CD4-positive, alpha-beta memory T cell (primary cell): ENCODE measurements at regions of chr2 and their contacts with region 1.

Region 1: DNA sequence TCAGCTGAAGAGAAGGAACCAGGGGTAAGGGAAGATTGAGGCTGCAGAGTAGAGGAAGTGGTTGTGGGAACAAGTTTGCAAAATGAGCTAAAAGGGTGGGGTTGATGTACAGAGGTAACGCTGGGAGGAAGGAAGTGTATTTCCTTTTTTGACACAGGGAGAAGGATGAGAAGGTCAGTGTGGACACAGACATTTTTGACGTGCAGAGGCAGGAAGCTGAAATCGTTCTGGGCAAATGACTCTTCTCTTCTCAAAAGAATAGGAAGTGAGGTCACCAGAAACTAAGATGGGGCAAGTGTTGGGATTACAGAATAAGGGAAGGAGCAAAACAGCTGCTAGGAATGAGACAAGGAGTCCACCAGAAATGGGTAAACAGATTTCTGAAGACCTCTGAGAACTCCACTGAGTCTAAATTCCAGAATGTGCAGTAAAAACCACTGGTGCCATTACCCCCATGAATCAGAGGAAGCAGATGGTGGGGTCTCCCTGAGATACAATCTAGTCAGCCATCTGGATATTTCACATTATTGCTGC is 20.0 kb upstream of the RNF149 start:
- DNase-seq: peak; percentile 65 to 81 (median 80)
- H3K4me3 ChIP-seq: peak overlapping the region; percentile 2 to 39
- H3K4me3 Mint-ChIP-seq: no peak overlapping the region
- H3K27ac ChIP-seq: peak overlapping the region; percentile 52
- H3K27ac Mint-ChIP-seq: no peak overlapping the region
- H3K4me1 ChIP-seq: peaks cover 70% of the 10 kb centered on the region
- H3K4me1 Mint-ChIP-seq: peaks cover 5 to 33% (median 6%) of the 10 kb centered on the region in 4 donors
- H3K27me3 ChIP-seq: no peaks in the 10 kb centered on the region
- H3K27me3 Mint-ChIP-seq: no peaks in the 10 kb centered on the region

Region 2: GRCh38 chr2:100013892-100014677 is 1314.5 kb before region 1 on chr2:
- CTCF ChIA-PET with region 1: no interaction called
- POLR2A ChIA-PET with region 1: no interaction called
- intact Hi-C with region 1: no loop called
- DNase-seq: no peak
- H3K4me3 ChIP-seq: no peak overlapping the region
- H3K4me3 Mint-ChIP-seq: no peak overlapping the region
- H3K27ac ChIP-seq: no peak overlapping the region
- H3K27ac Mint-ChIP-seq: no peak overlapping the region
- H3K4me1 ChIP-seq: no peaks in the 10 kb centered on the region
- H3K4me1 Mint-ChIP-seq: no peaks in the 10 kb centered on the region
- H3K27me3 ChIP-seq: no peaks in the 10 kb centered on the region
- H3K27me3 Mint-ChIP-seq: no peaks in the 10 kb centered on the region

Region 3: DNA sequence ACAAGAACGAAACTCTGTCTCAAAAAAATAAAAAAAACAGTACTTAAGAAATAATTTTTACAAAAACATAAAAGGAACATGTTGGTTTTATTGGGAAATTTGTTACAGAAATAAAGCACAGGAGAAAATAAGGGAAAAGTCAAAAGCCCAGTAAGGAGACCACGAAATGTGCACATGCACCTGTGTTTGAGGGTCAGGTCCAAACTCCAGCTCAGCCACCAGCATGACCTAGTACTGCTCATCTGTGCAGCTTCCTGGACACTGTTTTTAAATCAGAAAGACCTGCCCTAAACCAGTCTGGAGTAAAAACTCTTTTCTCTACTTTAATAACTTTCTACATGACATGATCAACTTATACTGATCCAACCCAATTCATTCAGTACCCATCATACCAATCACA is 41.2 kb before region 1 on chr2:
- CTCF ChIA-PET with region 1: no interaction called
- POLR2A ChIA-PET with region 1: interaction called, 12 read pairs
- intact Hi-C with region 1: no loop called
- DNase-seq: no peak
- H3K4me3 ChIP-seq: no peak overlapping the region
- H3K4me3 Mint-ChIP-seq: no peak overlapping the region
- H3K27ac ChIP-seq: no peak overlapping the region
- H3K27ac Mint-ChIP-seq: peak overlapping the region in 3 of 7 donors; percentile 42 to 65 (median 54)
- H3K4me1 ChIP-seq: no peaks in the 10 kb centered on the region
- H3K4me1 Mint-ChIP-seq: peaks cover 19 to 40% (median 34%) of the 10 kb centered on the region in 4 donors
- H3K27me3 ChIP-seq: no peaks in the 10 kb centered on the region
- H3K27me3 Mint-ChIP-seq: no peaks in the 10 kb centered on the region

Region 4: DNA sequence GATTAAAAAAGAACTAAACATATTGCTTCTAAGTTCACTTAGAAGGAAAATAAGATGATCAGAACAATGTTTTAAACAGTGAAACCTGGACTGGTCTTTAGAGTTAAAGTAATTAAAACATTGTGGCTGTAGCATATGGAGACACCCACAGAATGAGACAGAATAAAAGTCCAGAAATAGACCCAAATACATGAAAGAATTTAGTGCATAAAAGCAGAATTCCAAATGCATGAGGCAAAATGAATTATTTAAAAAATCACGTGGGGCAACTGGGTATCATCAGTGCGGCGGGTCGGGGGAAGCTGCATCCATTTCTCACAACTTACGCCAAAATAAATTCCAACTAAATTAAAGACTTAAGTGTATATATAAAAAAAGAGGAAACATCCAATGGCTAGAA is 32.2 kb before region 1 on chr2:
- CTCF ChIA-PET with region 1: interaction called, 3 read pairs
- POLR2A ChIA-PET with region 1: interaction called, 15 read pairs
- intact Hi-C with region 1: no loop called
- DNase-seq: no peak
- H3K4me3 ChIP-seq: no peak overlapping the region
- H3K4me3 Mint-ChIP-seq: peak overlapping the region in 7 of 8 donors; percentile 26 to 81 (median 37)
- H3K27ac ChIP-seq: no peak overlapping the region
- H3K27ac Mint-ChIP-seq: peak overlapping the region in 5 of 7 donors; percentile 29 to 96 (median 77)
- H3K4me1 ChIP-seq: peaks cover 73% of the 10 kb centered on the region
- H3K4me1 Mint-ChIP-seq: peaks cover 50 to 92% (median 60%) of the 10 kb centered on the region in 4 donors
- H3K27me3 ChIP-seq: no peaks in the 10 kb centered on the region
- H3K27me3 Mint-ChIP-seq: no peaks in the 10 kb centered on the region

Region 5: GRCh38 chr2:101302013-101302412 is 26.5 kb before region 1 on chr2:
- CTCF ChIA-PET with region 1: interaction called, 4 read pairs
- POLR2A ChIA-PET with region 1: interaction called, 247 read pairs
- intact Hi-C with region 1: loop called (anchors 1 kb)
- DNase-seq: no peak
- H3K4me3 ChIP-seq: no peak overlapping the region
- H3K4me3 Mint-ChIP-seq: peak overlapping the region in 7 of 8 donors; percentile 9 to 67 (median 46)
- H3K27ac ChIP-seq: peak overlapping the region; percentile 6
- H3K27ac Mint-ChIP-seq: peak overlapping the region in 5 of 7 donors; percentile 37 to 96 (median 47)
- H3K4me1 ChIP-seq: peaks cover 92% of the 10 kb centered on the region
- H3K4me1 Mint-ChIP-seq: peaks cover 66 to 98% (median 80%) of the 10 kb centered on the region in 4 donors
- H3K27me3 ChIP-seq: no peaks in the 10 kb centered on the region
- H3K27me3 Mint-ChIP-seq: no peaks in the 10 kb centered on the region

Region 6: DNA sequence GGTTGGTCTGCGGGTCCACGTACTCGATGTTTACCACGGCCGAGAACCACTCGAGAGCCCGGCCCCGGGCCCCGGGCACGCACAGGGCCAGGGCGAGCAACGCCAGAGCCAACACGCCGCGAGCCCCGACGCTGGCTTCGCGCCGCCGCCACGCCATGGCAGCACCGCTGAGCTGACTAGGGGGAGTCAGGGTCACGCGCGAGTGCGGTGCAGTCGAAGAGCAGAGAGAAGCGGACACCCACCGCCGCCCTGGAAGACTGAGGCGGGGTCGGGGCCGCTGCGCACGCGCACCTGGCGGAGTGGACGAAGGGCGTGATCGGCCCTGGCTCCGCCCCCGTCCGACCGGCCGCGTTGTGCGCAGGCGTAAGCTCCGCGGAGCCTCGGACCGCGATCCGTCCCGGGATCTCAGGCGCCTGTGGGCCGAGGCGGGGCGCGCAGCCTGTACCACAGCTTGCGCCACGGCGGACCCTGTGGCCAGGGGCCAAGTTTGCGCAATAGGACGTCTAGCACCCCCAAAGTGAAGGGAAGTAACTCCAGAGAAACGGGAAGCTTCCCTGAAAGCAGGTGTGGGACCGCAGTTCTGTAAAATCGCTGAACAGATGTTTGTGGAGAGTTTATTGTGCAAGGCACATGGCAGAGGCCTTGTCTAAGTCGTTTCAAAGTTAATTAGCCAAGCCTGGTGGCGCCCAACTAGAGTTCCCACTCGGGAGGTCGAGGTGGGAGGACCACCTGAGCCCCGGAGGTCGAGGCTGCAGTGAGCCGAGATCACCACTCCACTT is 19.9 kb before region 1 on chr2 and contains the start of gene RNF149:
- CTCF ChIA-PET with region 1: interaction called, 17 read pairs
- POLR2A ChIA-PET with region 1: interaction called, 247 read pairs
- intact Hi-C with region 1: loop called (anchors 1 kb)
- DNase-seq: peak; percentile 89 to 92 (median 90)
- H3K4me3 ChIP-seq: peak within 1 kb of the TSS; percentile 68 to 92
- H3K4me3 Mint-ChIP-seq: peak within 1 kb of the TSS; percentile 93 to 100 (median 100)
- H3K27ac ChIP-seq: peak within 1 kb of the TSS; percentile 86
- H3K27ac Mint-ChIP-seq: peak within 1 kb of the TSS; percentile 96 to 100 (median 99)
- H3K4me1 ChIP-seq: peaks cover 72% of the 10 kb centered on the region
- H3K4me1 Mint-ChIP-seq: peaks cover 53 to 95% (median 67%) of the 10 kb centered on the region in 4 donors
- H3K27me3 ChIP-seq: no peaks in the 10 kb centered on the region
- H3K27me3 Mint-ChIP-seq: no peaks in the 10 kb centered on the region
- total RNA-seq, gene RNF149: 138 to 154 TPM

Region 7: GRCh38 chr2:101341901-101342624 is 13.5 kb after region 1 on chr2:
- CTCF ChIA-PET with region 1: interaction called, 64 read pairs
- POLR2A ChIA-PET with region 1: interaction called, 18 read pairs
- intact Hi-C with region 1: loop called (anchors 2 kb)
- DNase-seq: peak; percentile 59 to 66 (median 62)
- H3K4me3 ChIP-seq: no peak overlapping the region
- H3K4me3 Mint-ChIP-seq: peak overlapping the region in 4 of 8 donors; percentile 21 to 58 (median 34)
- H3K27ac ChIP-seq: no peak overlapping the region
- H3K27ac Mint-ChIP-seq: peak overlapping the region in 5 of 7 donors; percentile 25 to 75 (median 65)
- H3K4me1 ChIP-seq: peaks cover 26% of the 10 kb centered on the region
- H3K4me1 Mint-ChIP-seq: peaks cover 21 to 33% (median 29%) of the 10 kb centered on the region in 4 donors
- H3K27me3 ChIP-seq: no peaks in the 10 kb centered on the region
- H3K27me3 Mint-ChIP-seq: no peaks in the 10 kb centered on the region

Region 8: DNA sequence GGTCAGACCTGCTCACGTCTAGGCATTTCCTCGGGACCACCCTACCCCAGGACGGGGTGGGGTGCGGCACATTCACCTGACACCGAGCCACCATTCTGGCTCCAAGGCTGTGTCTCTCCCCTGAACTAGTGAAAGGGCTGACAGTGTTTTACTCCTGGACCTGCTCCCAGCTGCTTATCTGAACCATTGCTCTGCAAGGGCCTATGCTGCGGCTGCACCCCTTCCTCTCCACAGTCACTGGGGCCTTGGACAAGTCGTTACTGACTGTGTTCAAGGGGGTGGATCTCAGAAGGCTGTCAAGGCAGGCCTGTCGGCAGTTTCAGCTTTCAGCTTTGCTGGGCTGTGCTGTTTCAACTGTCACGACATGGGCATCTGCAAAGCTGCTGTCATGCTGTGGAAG is 47.1 kb after region 1 on chr2:
- CTCF ChIA-PET with region 1: no interaction called
- POLR2A ChIA-PET with region 1: no interaction called
- intact Hi-C with region 1: no loop called
- DNase-seq: no peak
- H3K4me3 ChIP-seq: no peak overlapping the region
- H3K4me3 Mint-ChIP-seq: no peak overlapping the region
- H3K27ac ChIP-seq: no peak overlapping the region
- H3K27ac Mint-ChIP-seq: no peak overlapping the region
- H3K4me1 ChIP-seq: peaks cover 8% of the 10 kb centered on the region
- H3K4me1 Mint-ChIP-seq: peaks cover 0 to 9% (median 4%) of the 10 kb centered on the region in 4 donors
- H3K27me3 ChIP-seq: no peaks in the 10 kb centered on the region
- H3K27me3 Mint-ChIP-seq: no peaks in the 10 kb centered on the region

Region 9: DNA sequence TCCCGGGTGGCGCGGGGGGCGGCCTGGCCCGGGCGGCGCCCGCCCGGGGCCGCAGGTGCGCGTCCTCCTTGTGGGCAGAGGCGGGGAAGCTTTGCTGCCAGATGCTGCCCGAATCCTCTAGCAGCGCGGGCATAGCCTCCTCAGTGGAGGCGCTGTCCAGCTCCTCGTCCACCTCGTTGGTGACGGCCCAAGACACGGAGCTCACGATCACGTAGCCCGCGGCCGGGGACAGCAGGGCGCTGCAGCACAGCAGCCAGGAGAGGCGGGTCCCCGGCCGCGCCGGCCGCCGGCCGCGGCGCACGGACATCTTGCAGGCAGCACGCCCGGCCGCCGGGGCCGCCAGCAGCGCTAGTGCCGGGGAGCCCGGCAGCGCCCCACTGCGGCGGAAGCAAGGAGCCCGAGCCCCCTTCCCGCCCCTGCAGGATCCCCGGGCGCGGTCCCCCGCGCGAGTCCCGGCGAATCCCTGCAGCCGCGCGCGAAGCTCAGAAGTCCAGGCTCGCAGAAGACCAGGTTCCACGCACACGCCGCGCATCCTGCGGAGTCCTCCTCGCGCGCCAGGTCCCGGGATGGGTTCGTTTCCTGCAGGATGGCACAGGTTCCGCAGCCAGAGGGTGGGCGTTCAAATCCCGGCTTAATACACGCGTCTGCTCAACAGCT is 58.7 kb after region 1 on chr2 and contains the start of gene CREG2:
- CTCF ChIA-PET with region 1: interaction called, 11 read pairs
- POLR2A ChIA-PET with region 1: no interaction called
- intact Hi-C with region 1: no loop called
- DNase-seq: peak in 4 of 5 donors; percentile 56 to 63 (median 62)
- H3K4me3 ChIP-seq: peak within 1 kb of the TSS in 1 of 2 donors; percentile 38
- H3K4me3 Mint-ChIP-seq: peak within 1 kb of the TSS; percentile 75 to 89 (median 83)
- H3K27ac ChIP-seq: no peak within 1 kb of the TSS
- H3K27ac Mint-ChIP-seq: no peak within 1 kb of the TSS
- H3K4me1 ChIP-seq: peaks cover 15% of the 10 kb centered on the region
- H3K4me1 Mint-ChIP-seq: peaks cover 4 to 11% (median 8%) of the 10 kb centered on the region in 4 donors
- H3K27me3 ChIP-seq: peaks cover 17% of the 10 kb centered on the region
- H3K27me3 Mint-ChIP-seq: peaks cover 30 to 43% of the 10 kb centered on the region in 2 donors
- total RNA-seq, gene CREG2: not detected